ENCODE measurements at regions of chr18 and their contacts with region 1.

Region 1: GRCh38 chr18:10453806-10454673 is at the start of gene APCDD1:
- DNase-seq: peak; percentile 88
- ATAC-seq: peak; percentile 88
- total RNA-seq, gene APCDD1: 24.9 TPM

Region 2: DNA sequence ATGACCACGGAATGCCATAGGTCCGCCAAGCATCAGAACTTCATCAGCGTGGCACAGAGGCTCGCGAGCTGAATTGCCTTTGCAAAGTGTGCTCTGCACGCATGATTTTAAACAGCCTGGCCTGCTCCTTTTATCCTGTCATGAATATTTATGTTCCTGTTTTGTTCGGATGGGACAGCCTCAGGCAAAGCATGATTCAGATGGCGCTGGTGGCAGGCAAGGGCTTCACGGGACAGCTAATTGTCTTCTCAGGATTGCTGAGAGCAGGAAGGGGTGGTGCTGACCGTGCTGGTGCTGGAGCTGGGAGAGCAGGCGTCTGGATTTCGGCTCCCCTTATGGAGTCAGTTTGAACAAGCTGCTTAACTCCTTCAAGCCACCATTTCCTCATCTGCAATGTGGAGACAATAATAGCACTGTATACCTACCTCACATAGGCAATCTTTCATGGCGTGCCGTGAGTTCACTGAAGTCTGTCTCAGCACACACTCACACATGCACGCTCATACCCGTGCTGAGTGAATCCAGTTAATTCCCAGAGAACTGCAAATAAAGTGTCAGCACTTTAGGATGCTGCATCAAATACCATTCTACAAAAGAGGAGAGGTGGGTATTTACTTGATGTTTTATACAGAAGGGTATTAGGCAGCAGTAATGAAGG is 79.3 kb before region 1 on chr18:
- intact Hi-C with region 1: no loop called
- DNase-seq: no peak
- ATAC-seq: no peak

Region 3: DNA sequence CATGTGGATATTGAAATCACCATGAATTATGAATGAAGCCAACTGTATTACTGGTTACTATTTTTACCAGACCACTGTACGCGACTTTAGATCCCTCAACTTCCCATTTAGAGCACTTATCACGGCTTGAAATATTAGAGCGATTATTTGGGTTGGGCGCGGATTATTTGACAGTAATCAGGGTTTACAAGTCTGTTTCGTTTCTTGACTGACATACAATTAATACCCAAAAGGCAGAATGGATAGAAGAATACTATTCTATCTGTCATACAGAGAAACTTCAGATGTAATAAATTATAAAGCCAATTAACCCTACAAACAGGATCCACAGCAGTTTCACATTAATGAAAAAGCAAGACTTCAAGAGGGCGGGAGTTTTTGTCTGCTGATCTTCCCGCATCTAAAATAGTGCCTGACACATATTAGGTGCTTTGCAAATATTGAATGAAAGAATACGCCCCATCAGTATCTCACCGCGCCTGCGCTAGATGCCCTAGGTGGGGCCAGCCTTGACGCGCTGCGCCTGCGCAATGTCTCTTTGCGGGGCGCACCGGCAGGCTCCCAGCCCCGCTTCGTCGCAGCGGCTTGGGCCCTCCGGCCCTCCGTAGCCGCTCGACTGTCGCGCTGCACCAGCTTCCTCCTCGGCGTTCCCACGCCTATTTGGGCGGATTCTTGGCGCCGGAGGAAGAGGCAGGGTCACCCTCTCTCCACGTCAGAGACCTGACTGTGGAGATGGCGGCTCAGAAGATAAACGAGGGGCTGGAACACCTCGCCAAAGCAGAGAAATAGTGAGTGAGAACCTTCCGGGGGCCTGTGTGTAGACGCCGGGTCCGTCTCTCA is 71.6 kb after region 1 on chr18 and contains the start of gene NAPG:
- intact Hi-C with region 1: loop called (anchors 10 kb)
- DNase-seq: peak; percentile 96
- ATAC-seq: peak; percentile 93
- total RNA-seq, gene NAPG: 26.2 TPM